OCI-LY7 (cell line): ENCODE measurements at regions of chr5 and their contacts with region 1.

Region 1: DNA sequence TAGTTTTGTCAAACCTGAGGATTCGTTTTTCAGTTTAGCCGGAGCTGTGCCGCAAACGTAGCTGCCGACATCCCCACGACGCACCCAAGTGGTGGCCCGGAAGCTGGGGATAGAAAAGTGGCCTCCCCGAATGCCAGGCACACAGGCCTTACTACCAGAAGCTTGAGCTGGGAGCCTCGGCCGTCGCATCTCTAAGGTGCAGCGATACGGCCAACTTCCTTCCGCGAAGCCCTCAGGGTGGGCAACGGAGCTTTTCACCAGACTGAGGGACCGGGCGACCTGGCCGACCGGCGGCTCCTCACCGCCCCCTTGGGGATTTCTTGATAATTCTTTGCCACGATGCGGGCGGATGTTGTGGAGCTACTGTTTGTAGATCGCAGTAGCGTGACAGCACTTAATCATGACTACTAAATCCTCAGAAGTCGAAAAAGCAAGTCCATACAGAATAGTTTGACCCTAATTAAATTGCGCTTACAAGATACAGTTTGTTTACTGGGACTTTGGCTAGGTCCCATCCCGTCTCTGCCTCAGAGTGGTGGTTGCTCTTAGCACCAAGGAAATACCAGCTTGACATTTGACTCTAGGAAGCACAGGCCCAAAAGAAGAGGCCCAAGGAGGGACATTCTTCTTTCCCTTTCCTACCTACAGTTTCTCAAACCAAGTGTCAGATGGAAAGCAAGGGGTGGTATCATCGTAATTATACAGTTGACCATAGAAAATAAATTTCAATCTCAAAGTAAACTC is 613 bp upstream of the TMEM267 start:
- DNase-seq: peak; percentile 92
- H3K4me3 ChIP-seq: peak overlapping the region; percentile 84
- H3K27ac ChIP-seq: peak overlapping the region; percentile 88
- H3K4me1 ChIP-seq: peaks cover 27% of the 10 kb centered on the region
- CTCF ChIP-seq: peak; percentile 86

Region 2: DNA sequence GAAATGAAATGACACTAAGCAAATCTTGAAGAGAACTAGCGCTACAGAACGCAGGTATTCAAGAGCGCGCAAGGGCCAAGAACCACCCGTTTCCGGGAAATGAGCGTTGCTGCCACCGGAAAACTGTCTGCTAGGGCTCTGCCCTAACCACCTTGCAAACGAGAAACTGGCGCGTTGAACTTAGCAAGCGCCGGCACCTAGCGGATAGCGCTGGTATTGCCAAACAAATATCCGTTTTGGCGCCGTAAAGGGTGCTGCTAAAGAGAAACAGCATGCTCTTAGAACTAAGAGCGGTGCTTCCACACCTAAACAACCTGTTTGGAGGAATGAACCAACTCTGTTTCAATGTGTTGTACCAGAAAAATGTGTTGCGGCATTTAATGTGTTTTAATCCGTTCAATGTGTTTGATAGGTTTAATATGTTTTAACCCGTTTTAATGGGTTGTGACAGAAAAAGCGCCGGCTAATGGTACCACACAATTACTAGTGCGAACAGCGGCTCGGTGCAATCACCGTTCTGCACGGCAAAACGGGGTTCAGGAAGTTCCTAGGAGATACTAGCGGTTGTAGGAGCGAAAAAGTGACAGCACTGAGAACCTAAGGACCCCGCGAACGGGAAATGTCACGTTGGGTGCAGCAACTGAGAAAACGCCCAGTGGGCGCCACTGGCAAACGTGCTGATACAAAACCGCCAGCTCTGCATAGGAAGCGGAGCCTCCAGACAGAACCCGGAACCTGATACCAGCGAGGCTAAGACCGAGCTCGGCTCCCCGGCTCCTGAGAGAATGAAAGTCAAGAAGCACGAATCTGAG is 443.8 kb before region 1 on chr5 and contains the start of gene ANXA2R:
- CTCF ChIA-PET with region 1: interaction called, 5 read pairs
- POLR2A ChIA-PET with region 1: interaction called, 8 read pairs
- intact Hi-C with region 1: loop called (anchors 1 kb)
- DNase-seq: peak; percentile 98
- H3K4me3 ChIP-seq: peak within 1 kb of the TSS; percentile 70
- H3K27ac ChIP-seq: peak within 1 kb of the TSS; percentile 95
- H3K4me1 ChIP-seq: peaks cover 34% of the 10 kb centered on the region
- CTCF ChIP-seq: peak; percentile 77
- total RNA-seq, gene ANXA2R: 13.5 and 15.4 TPM in 2 replicates

Region 3: DNA sequence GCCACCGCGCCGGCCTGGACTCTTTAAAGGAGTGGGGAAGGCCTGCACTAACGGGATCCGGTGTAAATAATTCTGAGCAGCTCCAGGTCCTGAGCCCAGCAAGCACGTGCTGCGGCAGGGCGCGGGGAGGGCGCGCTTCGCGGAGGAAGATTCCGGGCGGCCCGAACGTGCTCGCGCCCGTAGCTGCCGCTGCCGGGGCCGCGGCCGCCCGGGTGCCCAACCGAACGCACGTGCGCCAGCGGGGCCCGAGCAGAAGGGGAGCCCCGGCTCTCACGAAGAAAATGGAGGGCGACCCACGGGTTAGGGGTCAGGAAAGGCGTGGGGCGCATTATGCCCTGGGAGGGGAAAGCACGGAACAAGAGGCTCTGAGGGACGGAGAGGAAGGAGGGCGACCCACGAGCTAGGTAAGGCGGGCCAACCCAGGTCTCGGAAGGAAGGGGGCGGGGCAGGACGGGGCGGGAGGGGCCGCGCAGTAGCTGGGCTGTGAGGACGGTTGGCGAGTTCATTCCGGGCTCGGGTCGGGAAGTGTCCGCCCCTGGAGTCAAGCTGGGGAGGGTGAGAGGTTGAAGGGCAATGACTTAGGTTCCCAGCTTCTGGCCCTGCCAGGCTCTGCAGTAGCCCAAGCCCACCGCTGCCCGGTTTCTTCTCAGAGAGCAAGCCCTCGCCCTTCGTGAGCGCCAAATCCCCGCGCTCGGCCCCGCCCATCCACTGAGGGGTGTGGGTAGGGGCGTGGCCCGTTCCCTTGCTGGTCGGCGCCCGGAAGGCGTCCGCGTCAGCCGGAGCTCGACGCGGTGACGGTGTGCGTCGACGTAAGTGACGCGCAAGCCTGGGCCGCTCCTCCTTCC is 363.3 kb before region 1 on chr5 and contains the start of gene ZNF131:
- CTCF ChIA-PET with region 1: interaction called, 7 read pairs
- POLR2A ChIA-PET with region 1: interaction called, 8 read pairs
- intact Hi-C with region 1: loop called (anchors 2 kb)
- DNase-seq: peak; percentile 98
- H3K4me3 ChIP-seq: peak within 1 kb of the TSS; percentile 80
- H3K27ac ChIP-seq: peak within 1 kb of the TSS; percentile 77
- H3K4me1 ChIP-seq: peaks cover 35% of the 10 kb centered on the region
- CTCF ChIP-seq: no peak
- total RNA-seq, gene ZNF131: 59.0 and 61.0 TPM in 2 replicates

Region 4: GRCh38 chr5:43389679-43390329 is 94.5 kb before region 1 on chr5:
- CTCF ChIA-PET with region 1: no interaction called
- POLR2A ChIA-PET with region 1: interaction called, 4 read pairs
- intact Hi-C with region 1: loop called (anchors 5 kb)
- DNase-seq: peak; percentile 74
- H3K4me3 ChIP-seq: no peak overlapping the region
- H3K27ac ChIP-seq: no peak overlapping the region
- H3K4me1 ChIP-seq: no peaks in the 10 kb centered on the region
- CTCF ChIP-seq: peak; percentile 97

Region 5: GRCh38 chr5:43497311-43498104 is 13.2 kb after region 1 on chr5:
- CTCF ChIA-PET with region 1: no interaction called
- POLR2A ChIA-PET with region 1: interaction called, 8 read pairs
- intact Hi-C with region 1: loop called (anchors 2 kb)
- DNase-seq: no peak
- H3K4me3 ChIP-seq: no peak overlapping the region
- H3K27ac ChIP-seq: no peak overlapping the region
- H3K4me1 ChIP-seq: no peaks in the 10 kb centered on the region
- CTCF ChIP-seq: no peak

Region 6: DNA sequence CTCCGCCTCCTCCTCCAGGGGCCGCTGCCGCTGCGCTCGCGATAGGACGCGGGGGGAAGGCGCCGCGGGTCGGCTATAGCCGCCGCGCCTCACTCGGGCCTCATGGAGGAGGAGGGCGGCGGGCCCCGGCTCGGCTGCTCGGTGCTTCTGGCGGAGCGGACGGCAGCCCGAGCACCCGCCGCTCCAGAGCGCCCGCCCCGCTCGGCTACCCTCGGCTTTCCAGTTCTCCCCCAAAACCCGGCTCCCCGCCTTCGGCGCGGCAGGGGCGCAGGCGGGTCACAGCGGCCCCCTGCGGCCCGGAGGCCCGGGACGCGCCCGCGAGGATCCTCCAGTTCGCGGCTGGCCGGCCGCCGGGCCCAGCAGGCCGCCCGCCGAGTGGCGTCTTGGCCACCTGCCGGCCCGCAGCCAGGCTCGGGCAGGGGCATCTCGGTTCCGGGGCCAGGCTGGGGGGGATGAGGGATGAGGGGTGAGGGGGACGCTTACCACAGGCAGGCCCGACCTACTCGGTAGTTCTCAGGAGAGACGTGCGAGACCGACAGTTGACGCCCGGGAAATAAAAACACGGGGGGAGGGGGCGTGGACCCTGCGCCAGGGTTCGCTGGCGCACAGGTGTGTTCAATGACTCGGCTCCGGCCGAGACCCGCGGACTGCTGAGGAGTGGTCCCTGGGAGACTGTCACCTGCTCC is 72.7 kb after region 1 on chr5 and contains the start of gene PAIP1:
- CTCF ChIA-PET with region 1: no interaction called
- POLR2A ChIA-PET with region 1: interaction called, 23 read pairs
- intact Hi-C with region 1: loop called (anchors 1 kb)
- DNase-seq: peak; percentile 89
- H3K4me3 ChIP-seq: peak within 1 kb of the TSS; percentile 75
- H3K27ac ChIP-seq: peak within 1 kb of the TSS; percentile 77
- H3K4me1 ChIP-seq: peaks cover 35% of the 10 kb centered on the region
- CTCF ChIP-seq: peak; percentile 80
- total RNA-seq, gene PAIP1: 52.8 and 69.2 TPM in 2 replicates

Region 7: DNA sequence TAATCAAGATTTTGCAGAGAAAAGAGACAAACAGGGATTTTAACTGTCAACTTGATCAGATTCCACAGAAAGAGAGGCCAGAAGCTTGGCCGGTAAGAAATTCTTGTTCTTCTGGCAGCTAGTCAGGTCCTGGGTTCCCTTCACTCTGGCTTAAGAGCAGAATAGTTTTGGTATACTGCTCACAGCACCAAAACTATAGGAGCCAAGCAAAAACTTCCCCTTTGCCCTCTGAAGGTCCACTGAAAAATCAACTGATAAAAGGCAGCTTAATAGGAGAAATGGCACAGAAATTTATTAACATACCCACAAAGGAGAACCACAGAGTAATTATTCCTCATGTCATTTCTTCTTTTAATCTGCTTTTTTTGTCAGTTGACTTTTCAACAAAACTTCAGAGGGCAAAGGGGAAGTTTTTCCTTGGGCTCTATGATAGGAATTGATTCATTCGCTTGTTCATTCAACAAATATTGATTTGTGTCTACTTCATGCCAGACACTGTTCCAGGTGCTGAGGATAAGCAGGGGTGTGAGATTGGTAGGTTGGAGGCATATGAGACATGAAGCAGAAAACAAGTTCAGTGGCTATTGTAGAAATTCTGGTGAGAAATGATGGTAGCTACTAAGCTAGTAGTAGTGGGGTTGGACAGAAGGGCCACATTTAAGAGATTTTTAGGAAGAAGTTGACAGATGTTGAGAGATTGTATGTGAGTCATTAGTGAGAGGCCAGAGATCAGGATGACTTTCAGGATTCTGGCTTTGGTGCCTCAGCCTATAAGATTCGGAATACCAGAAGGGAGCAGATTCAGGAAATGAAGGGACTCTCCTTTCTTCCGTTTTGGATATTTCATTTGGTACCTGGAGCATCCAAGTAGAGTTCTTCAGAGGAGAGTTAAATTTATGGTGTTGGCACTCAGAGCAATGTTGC is 98.1 kb after region 1 on chr5:
- CTCF ChIA-PET with region 1: no interaction called
- POLR2A ChIA-PET with region 1: no interaction called
- intact Hi-C with region 1: no loop called
- DNase-seq: no peak
- H3K4me3 ChIP-seq: no peak overlapping the region
- H3K27ac ChIP-seq: no peak overlapping the region
- H3K4me1 ChIP-seq: no peaks in the 10 kb centered on the region
- CTCF ChIP-seq: no peak

Region 8: GRCh38 chr5:43729846-43730478 is 245.7 kb after region 1 on chr5:
- CTCF ChIA-PET with region 1: no interaction called
- POLR2A ChIA-PET with region 1: no interaction called
- intact Hi-C with region 1: no loop called
- DNase-seq: peak; percentile 33
- H3K4me3 ChIP-seq: no peak overlapping the region
- H3K27ac ChIP-seq: no peak overlapping the region
- H3K4me1 ChIP-seq: no peaks in the 10 kb centered on the region
- CTCF ChIP-seq: peak; percentile 87

Region 9: DNA sequence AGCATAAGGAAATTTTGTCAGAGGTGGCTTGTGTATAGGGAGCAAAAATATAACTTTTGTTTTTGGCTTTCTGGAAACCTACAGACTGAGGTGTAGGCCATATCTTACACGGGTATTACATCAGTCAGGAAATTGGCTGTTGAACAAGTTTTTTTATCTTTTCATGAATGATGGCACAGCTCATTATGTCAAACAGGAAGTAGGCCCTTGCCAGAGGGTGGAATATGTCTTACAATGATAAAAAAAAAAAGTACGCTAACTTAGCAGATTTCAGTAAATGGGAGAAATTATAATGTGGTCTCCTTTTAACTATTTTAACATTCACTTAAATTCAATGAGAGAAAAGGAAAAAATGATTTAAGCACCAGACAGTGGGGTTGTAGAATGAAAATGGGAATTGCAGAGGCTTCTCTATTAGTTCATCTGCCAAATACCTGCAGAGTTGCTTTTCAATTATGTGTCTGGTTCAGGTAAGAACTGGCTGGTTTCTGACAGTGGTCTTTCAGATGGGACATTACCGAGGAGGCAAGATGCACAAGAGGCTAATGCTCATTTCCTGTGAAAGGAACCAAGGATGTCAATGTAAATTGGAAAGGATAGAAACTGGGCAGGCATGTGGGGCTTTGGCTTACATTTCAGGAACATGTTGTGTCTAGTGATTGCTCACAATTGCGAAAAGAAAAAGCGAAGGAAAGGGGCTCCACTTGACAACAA is 288.6 kb after region 1 on chr5:
- CTCF ChIA-PET with region 1: no interaction called
- POLR2A ChIA-PET with region 1: no interaction called
- intact Hi-C with region 1: no loop called
- DNase-seq: peak; percentile 1
- H3K4me3 ChIP-seq: no peak overlapping the region
- H3K27ac ChIP-seq: no peak overlapping the region
- H3K4me1 ChIP-seq: no peaks in the 10 kb centered on the region
- CTCF ChIP-seq: no peak